ENCODE measurements at regions of chr14 and their contacts with region 1.

Region 1: GRCh38 chr14:50109342-50109741 is 7.0 kb downstream of the VCPKMT start:
- DNase-seq: no peak
- ATAC-seq: no peak
- H3K4me3 ChIP-seq: no peak overlapping the region
- H3K27ac ChIP-seq: no peak overlapping the region
- H3K4me1 ChIP-seq: peaks cover 11% of the 10 kb centered on the region
- H3K27me3 ChIP-seq: no peaks in the 10 kb centered on the region
- CTCF ChIP-seq: no peak
- POLR2A ChIP-seq: no peak

Region 2: DNA sequence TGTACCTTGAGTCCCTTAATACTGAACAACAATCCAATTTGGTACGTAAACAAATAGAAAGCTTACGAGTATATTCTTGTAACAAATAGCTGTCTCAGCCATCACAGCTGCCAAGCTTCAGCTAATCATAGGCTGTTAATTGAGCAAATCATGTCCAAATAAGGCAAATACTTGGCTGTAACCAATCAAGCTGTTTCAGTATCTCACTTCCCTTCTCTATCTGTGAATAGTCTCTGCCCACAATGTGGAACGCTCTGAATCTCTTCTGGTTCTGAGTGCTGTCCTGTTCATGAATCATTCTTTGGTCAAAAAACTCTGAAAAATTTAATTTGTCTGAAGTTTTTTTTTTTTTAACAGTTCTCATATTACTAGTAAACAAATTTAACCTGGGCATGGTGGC is 251.0 kb before region 1 on chr14:
- intact Hi-C with region 1: loop called (anchors 5 kb)
- DNase-seq: no peak
- ATAC-seq: no peak
- H3K4me3 ChIP-seq: no peak overlapping the region
- H3K27ac ChIP-seq: no peak overlapping the region
- H3K4me1 ChIP-seq: peaks cover 13% of the 10 kb centered on the region
- H3K27me3 ChIP-seq: no peaks in the 10 kb centered on the region
- CTCF ChIP-seq: no peak
- POLR2A ChIP-seq: no peak

Region 3: GRCh38 chr14:49867831-49868723 is 241.3 kb before region 1 on chr14:
- intact Hi-C with region 1: loop called (anchors 5 kb)
- DNase-seq: peak; percentile 97 to 98 (median 98)
- ATAC-seq: peak; percentile 98
- H3K4me3 ChIP-seq: peak overlapping the region in 1 of 2 donors; percentile 24
- H3K27ac ChIP-seq: peak overlapping the region; percentile 79 to 95 (median 88)
- H3K4me1 ChIP-seq: peaks cover 35% of the 10 kb centered on the region
- H3K27me3 ChIP-seq: no peaks in the 10 kb centered on the region
- CTCF ChIP-seq: no peak
- POLR2A ChIP-seq: peak; percentile 83 to 97 (median 92)

Measured in body of pancreas (tissue), 4 donors.